AG04449 (cell line): ENCODE measurements at regions of chr11 and their contacts with region 1.

Region 1: GRCh38 chr11:76734456-76735420 is 48.4 kb upstream of the TSKU start:
- DNase-seq: no peak
- H3K4me3 ChIP-seq: no peak overlapping the region
- CTCF ChIP-seq: no peak

Region 2: GRCh38 chr11:76480241-76480640 is 254.5 kb before region 1 on chr11:
- CTCF ChIA-PET with region 1: no interaction called
- POLR2A ChIA-PET with region 1: no interaction called
- DNase-seq: no peak
- H3K4me3 ChIP-seq: no peak overlapping the region
- CTCF ChIP-seq: no peak

Region 3: GRCh38 chr11:76762867-76763572 is 28.3 kb after region 1 on chr11:
- CTCF ChIA-PET with region 1: interaction called, 22 read pairs
- POLR2A ChIA-PET with region 1: no interaction called
- DNase-seq: no peak
- H3K4me3 ChIP-seq: no peak overlapping the region
- CTCF ChIP-seq: no peak

Region 4: DNA sequence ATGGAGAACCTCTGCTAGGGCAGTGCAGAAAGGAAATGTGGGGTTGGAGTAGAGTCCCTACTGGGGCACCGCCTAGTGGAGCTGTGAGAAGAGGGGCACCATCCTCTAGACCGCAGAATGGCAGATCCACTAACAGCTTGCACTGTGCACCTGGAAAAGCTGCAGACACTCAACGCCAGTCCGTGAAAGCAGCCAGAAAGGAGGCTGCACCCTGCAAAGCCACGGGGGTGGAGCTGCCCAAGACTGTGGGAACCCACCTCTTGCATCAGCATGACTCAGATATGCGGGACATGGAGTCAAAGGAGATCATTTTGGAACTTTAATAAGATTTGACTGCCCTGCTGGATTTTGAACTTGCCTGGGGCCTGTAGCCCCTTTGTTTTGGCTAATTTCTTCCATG is 57.1 kb after region 1 on chr11:
- CTCF ChIA-PET with region 1: interaction called, 419 read pairs
- POLR2A ChIA-PET with region 1: no interaction called
- DNase-seq: no peak
- H3K4me3 ChIP-seq: no peak overlapping the region
- CTCF ChIP-seq: no peak

Region 5: DNA sequence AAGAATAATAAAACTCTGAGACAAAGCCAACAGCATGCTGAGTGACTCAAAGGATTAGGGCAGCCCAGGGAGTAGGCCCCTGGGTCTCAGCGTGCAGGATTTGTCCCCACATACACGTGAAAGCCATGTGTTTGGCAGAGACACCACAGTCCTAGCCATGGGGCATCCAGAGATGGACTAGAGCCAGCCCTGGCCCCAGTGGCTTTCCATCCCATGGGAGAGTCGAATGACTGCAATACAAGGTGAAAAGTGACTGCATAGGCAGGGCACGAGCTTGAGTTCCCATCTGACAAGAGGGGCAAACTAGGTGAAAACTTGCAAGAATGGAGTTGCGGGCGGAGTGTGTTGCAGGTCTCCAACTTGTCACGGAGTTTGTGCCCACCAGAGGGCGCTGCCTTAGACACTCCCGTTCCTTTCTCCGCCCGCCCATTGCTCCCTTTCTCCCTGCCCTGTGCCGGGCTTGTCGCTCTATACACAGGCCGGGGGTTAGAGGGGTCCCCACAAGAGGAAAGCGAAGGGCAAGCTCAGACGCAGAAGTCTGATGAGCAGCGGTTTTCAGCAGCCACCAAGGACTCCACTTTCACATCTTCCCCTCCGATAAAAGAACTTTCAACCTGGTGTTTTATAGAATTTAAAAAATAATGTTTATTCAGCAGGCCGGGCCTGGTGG is 72.6 kb after region 1 on chr11:
- CTCF ChIA-PET with region 1: interaction called, 419 read pairs
- POLR2A ChIA-PET with region 1: interaction called, 4 read pairs
- DNase-seq: no peak
- H3K4me3 ChIP-seq: no peak overlapping the region
- CTCF ChIP-seq: peak; percentile 83

Region 6: DNA sequence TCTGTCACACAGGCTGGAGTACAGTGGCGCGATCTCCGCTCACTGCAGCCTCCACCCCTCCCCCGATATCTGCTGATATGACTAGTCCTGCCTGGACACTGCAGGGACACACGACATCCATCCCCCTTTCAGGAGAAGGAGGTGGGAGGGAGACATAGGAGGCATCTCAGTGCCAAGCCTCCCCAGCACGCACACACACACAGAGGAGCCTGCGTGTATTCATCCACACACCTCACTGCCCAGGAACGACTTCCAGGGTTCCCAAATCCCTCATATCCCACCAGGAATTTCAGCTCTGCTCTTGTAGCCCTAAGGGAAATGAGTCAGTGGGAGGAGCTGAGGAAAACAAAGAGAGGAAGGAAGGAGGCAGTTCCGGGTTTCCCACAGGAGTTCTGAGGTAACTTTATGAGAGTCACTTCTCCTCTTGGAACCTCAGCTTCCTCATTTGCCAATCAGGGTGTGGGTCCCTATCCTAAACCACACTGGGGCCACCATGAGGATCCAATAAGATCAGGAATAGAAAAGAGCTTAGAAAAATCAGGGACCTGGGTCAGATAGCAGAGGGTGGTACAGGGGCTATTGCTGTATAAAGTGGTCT is 88.8 kb after region 1 on chr11:
- CTCF ChIA-PET with region 1: interaction called, 12 read pairs
- POLR2A ChIA-PET with region 1: no interaction called
- DNase-seq: no peak
- H3K4me3 ChIP-seq: no peak overlapping the region
- CTCF ChIP-seq: no peak

Region 7: DNA sequence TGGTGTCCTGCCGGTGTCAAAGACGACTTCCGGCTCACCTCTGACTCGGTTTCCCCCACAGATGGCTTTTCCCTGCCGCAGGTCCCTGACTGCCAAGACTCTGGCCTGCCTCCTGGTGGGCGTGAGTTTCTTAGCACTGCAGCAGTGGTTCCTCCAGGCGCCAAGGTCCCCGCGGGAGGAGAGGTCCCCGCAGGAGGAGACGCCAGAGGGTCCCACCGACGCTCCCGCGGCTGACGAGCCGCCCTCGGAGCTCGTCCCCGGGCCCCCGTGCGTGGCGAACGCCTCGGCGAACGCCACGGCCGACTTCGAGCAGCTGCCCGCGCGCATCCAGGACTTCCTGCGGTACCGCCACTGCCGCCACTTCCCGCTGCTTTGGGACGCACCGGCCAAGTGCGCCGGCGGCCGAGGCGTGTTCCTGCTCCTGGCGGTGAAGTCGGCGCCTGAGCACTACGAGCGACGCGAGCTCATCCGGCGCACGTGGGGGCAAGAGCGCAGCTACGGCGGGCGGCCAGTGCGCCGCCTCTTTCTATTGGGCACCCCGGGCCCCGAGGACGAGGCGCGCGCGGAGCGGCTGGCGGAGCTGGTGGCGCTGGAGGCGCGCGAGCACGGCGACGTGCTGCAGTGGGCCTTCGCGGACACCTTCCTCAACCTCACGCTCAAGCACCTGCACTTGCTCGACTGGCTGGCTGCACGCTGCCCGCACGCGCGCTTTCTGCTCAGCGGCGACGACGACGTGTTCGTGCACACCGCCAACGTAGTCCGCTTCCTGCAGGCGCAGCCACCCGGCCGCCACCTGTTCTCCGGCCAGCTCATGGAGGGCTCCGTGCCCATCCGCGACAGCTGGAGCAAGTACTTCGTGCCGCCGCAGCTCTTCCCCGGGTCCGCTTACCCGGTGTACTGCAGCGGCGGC is 305.0 kb after region 1 on chr11:
- CTCF ChIA-PET with region 1: interaction called, 16 read pairs
- POLR2A ChIA-PET with region 1: no interaction called
- DNase-seq: no peak
- H3K4me3 ChIP-seq: peak overlapping the region; percentile 49
- CTCF ChIP-seq: peak; percentile 69